Adrenal gland (tissue), 19 donors: ENCODE measurements at regions of chr6 and their contacts with region 1.

Region 1: GRCh38 chr6:158220786-158221442 is 52.8 kb downstream of the GTF2H5 start:
- DNase-seq: peak; percentile 75 to 92 (median 82)
- H3K4me3 ChIP-seq: no peak overlapping the region
- H3K27ac ChIP-seq: no peak overlapping the region
- H3K4me1 ChIP-seq: no peaks in the 10 kb centered on the region
- H3K27me3 ChIP-seq: no peaks in the 10 kb centered on the region
- CTCF ChIP-seq: peak; percentile 88 to 96 (median 93)
- POLR2A ChIP-seq: no peak

Region 2: GRCh38 chr6:158081657-158081935 is 139.3 kb before region 1 on chr6:
- intact Hi-C with region 1: no loop called
- DNase-seq: peak in 6 of 7 donors; percentile 39 to 68 (median 58)
- H3K4me3 ChIP-seq: no peak overlapping the region
- H3K27ac ChIP-seq: no peak overlapping the region
- H3K4me1 ChIP-seq: no peaks in the 10 kb centered on the region
- H3K27me3 ChIP-seq: no peaks in the 10 kb centered on the region
- CTCF ChIP-seq: no peak
- POLR2A ChIP-seq: no peak

Region 3: GRCh38 chr6:158518191-158519127 is 297.5 kb after region 1 on chr6:
- intact Hi-C with region 1: loop called in 1 of 2 experiments (anchors 5 kb)
- DNase-seq: peak; percentile 48 to 79 (median 60)
- H3K4me3 ChIP-seq: peak overlapping the region in 1 of 4 donors; percentile 47
- H3K27ac ChIP-seq: peak overlapping the region in 1 of 5 donors; percentile 20
- H3K4me1 ChIP-seq: peaks cover 0 to 8% of the 10 kb centered on the region in 2 donors
- H3K27me3 ChIP-seq: peaks cover 8% of the 10 kb centered on the region
- CTCF ChIP-seq: peak; percentile 32 to 71 (median 60)
- POLR2A ChIP-seq: no peak

Region 4: GRCh38 chr6:158599635-158600034 is 378.7 kb after region 1 on chr6:
- intact Hi-C with region 1: loop called (anchors 5 to 10 kb)
- DNase-seq: no peak
- H3K4me3 ChIP-seq: no peak overlapping the region
- H3K27ac ChIP-seq: no peak overlapping the region
- H3K4me1 ChIP-seq: peaks cover 0 to 7% of the 10 kb centered on the region in 2 donors
- H3K27me3 ChIP-seq: no peaks in the 10 kb centered on the region
- CTCF ChIP-seq: no peak
- POLR2A ChIP-seq: no peak

Region 5: GRCh38 chr6:158605266-158605878 is 384.5 kb after region 1 on chr6:
- intact Hi-C with region 1: loop called (anchors 5 to 10 kb)
- DNase-seq: peak; percentile 59 to 92 (median 69)
- H3K4me3 ChIP-seq: no peak overlapping the region
- H3K27ac ChIP-seq: no peak overlapping the region
- H3K4me1 ChIP-seq: peaks cover 0 to 11% of the 10 kb centered on the region in 2 donors
- H3K27me3 ChIP-seq: no peaks in the 10 kb centered on the region
- CTCF ChIP-seq: peak; percentile 70 to 86 (median 78)
- POLR2A ChIP-seq: no peak

Region 6: GRCh38 chr6:158686791-158687381 is 466.0 kb after region 1 on chr6:
- intact Hi-C with region 1: loop called in 1 of 2 experiments (anchors 10 kb)
- DNase-seq: peak in 1 of 7 donors; percentile 25
- H3K4me3 ChIP-seq: no peak overlapping the region
- H3K27ac ChIP-seq: no peak overlapping the region
- H3K4me1 ChIP-seq: no peaks in the 10 kb centered on the region
- H3K27me3 ChIP-seq: no peaks in the 10 kb centered on the region
- CTCF ChIP-seq: no peak
- POLR2A ChIP-seq: no peak